ENCODE measurements at regions of chr9 and their contacts with region 1.

Region 1: DNA sequence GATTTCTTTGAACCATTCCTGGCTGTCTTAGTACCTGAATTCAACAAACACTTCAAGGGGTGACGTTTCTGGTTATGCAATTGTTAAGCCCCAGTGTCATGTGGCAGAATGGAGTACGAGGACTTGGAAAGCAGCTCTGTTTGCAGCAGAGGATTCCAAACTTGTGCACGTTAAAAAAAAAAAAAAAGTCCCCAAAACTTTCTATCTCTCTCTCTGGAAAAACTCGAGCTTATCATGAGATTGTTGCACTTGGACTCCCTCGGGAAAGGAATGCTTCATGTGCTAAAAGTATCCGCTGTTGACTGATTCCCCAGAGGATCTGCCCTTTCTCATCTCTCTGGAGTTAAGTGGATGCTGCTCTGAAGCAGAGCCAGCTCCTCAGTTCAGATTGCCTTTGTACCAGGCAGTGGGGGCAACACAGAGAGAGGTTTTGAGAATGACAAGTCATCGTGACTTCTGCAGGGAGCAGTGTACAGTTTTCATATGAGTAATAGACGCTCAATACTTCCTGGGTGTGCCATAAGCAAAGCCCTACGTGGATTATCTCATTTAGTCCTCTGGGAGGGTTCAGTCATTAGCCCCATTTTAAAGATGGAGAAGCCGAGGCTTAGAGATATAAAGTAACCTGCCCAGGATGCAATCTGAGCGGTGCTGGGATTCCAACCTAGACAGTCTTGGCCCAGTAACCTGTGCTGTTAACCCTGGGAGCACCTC is 28.1 kb downstream of the TMOD1 start:
- DNase-seq: no peak

Region 2: DNA sequence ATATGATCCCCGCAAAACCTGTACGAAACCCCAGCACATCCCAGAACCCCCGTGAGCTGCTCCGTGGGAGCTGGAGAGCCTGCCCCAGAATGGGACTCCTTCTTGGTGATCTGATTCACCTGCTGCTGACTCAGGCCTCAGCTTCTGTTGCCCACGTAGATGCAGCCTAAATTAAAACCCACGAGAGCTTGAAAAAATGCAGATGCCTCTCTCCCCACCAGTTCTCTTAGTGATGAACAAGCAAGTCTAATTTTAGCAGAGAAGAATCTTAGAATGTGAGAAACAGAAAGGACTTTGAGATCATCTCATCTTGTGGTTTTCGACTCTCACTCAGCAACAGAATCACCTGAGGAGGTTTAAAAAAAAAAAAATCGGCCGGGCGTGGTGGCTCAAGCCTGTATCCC is 29.6 kb after region 1 on chr9:
- intact Hi-C with region 1: loop called (anchors 2 kb)
- DNase-seq: no peak

Region 3: GRCh38 chr9:97645720-97646119 is 116.2 kb after region 1 on chr9:
- intact Hi-C with region 1: no loop called
- DNase-seq: no peak

Measured in cardiac septum (tissue), 1 donor.